AG04450 (cell line): ENCODE measurements at regions of chr1 and their contacts with region 1.

Region 1: GRCh38 chr1:27662707-27663393 is 9.1 kb downstream of the IFI6 start:
- DNase-seq: no peak
- H3K4me3 ChIP-seq: no peak overlapping the region
- H3K27ac ChIP-seq: peak overlapping the region; percentile 21
- H3K27me3 ChIP-seq: no peaks in the 10 kb centered on the region
- CTCF ChIP-seq: peak; percentile 87

Region 2: GRCh38 chr1:27609618-27610240 is 53.1 kb before region 1 on chr1:
- CTCF ChIA-PET with region 1: interaction called, 113 read pairs
- POLR2A ChIA-PET with region 1: no interaction called
- DNase-seq: no peak
- H3K4me3 ChIP-seq: no peak overlapping the region
- H3K27ac ChIP-seq: no peak overlapping the region
- H3K27me3 ChIP-seq: peaks cover 13% of the 10 kb centered on the region
- CTCF ChIP-seq: no peak

Region 3: DNA sequence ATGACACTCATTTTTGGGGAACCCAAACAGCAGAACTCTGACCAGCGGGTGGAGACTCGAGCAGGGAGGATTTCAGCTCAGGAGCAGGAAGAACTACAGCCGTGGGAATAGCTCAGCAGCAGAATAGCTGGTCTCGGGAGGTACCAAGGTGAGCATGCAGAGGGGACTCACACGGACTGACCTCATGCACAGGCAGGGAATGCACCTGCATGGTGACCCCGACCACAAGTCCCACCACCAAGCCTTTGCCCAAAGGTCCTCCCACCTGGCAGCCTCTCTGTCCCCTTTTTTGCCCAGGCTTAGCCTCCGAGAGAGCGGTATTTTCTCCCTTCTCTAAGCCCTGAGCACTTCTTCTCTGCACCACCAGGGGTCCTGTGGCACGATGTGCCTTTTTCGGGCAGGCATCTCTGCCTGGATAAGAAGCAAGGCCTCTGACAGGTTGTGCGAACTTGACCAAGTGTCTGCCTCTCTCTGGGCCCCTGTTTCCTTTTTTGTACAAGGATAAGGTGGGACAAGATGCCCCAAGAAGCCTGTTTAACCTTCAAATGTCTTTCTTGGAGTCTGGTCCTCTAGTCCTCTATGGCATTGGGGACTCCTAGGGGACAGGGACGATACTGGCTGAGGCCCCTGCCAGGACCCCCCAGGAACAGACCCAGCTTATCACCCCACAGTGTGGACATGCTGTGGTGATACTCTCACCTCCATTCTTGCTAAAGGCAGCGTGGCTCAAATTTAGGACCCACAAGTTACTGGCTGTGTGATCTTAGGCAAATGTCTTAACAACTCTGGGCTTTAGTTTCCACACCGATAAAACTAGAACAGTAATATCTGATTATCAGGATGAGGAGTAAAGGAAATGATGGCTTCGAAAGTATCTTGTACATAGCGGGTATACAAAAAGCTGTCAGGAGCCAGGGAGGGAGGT is 18.9 kb before region 1 on chr1:
- CTCF ChIA-PET with region 1: interaction called, 11 read pairs
- POLR2A ChIA-PET with region 1: no interaction called
- DNase-seq: no peak
- H3K4me3 ChIP-seq: no peak overlapping the region
- H3K27ac ChIP-seq: no peak overlapping the region
- H3K27me3 ChIP-seq: peaks cover 11% of the 10 kb centered on the region
- CTCF ChIP-seq: peak; percentile 90

Region 4: DNA sequence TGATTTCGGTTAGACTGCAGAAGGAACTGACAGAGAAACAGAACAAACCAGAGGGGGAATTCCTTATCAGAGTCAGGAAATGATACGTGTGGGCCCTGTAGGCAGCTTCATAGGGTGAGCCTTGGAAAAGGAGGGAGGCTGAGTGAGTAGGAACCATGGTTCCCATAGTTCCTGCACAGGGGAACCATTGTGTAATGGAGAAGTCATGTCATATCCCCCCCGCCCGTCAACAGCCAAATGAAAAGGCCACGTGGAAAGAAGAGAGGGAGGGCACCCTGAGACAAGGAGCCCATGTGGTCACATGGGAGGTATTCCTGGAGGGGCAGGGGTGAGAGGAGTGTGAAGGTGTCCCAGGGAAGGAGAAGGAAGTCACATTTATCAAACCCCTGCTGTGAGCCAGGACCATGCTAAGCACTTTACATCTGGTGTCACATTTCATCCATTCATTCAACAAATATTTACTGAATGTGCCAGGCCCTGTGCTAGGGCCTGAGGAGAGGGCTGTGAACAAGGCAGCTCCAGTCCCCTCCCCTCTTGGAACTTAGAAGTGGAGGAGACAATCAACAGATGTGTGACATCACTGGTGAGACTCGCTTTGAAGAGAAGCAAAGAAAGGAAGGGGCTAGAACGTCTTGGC is 12.2 kb before region 1 on chr1:
- CTCF ChIA-PET with region 1: interaction called, 17 read pairs
- POLR2A ChIA-PET with region 1: no interaction called
- DNase-seq: no peak
- H3K4me3 ChIP-seq: no peak overlapping the region
- H3K27ac ChIP-seq: peak overlapping the region; percentile 21
- H3K27me3 ChIP-seq: peaks cover 4% of the 10 kb centered on the region
- CTCF ChIP-seq: no peak

Region 5: DNA sequence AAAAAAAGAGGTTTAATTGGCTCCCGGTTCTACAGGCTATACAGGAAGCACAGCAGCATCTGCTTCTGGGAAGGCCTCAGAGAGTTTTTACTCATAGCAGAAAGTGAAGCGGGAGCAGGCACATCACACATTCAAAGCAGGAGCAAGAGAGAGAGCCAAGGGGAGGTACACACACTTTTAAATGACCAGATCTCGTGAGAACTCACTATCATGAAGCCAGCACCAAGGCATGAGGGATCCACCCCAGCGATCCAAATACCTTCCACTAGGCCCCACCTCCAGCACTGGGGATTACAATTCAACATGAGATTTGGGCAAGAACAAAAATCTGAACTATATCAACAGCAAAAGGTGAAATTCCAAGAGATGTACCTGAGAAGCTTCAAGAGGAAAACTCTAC is 42.1 kb after region 1 on chr1:
- CTCF ChIA-PET with region 1: interaction called, 10 read pairs
- POLR2A ChIA-PET with region 1: no interaction called
- DNase-seq: no peak
- H3K4me3 ChIP-seq: no peak overlapping the region
- H3K27ac ChIP-seq: no peak overlapping the region
- H3K27me3 ChIP-seq: peaks cover 2% of the 10 kb centered on the region
- CTCF ChIP-seq: no peak

Region 6: GRCh38 chr1:27830621-27831424 is 168.0 kb after region 1 on chr1 and contains the start of gene PPP1R8:
- CTCF ChIA-PET with region 1: no interaction called
- POLR2A ChIA-PET with region 1: no interaction called
- DNase-seq: peak; percentile 83
- H3K4me3 ChIP-seq: peak within 1 kb of the TSS; percentile 93
- H3K27ac ChIP-seq: peak within 1 kb of the TSS; percentile 85
- H3K27me3 ChIP-seq: no peaks in the 10 kb centered on the region
- CTCF ChIP-seq: no peak
- polyA plus RNA-seq, gene PPP1R8: 52.7 and 55.2 TPM in 2 replicates